ENCODE measurements at regions of chr3 and their contacts with region 1.

Region 1: DNA sequence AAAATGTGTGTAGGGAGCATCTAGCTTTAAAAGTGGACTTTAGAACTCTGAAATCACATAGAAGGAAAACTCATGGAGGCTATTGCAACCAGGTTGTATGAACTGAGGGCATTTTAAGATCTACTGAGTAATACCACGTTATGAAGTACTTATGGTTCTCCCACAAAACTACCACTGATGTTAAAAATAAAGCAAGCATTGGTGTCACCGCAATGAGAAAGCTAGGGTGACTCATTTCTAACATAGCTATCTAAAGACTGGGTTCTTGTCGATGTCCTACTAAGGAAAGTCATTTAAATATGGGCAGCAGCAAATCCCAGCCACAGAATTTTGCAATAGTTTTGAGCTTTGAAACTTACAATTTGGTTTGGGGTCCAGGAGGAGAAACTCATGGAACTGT is 584.8 kb downstream of the DIPK2A start:
- DNase-seq: no peak
- ATAC-seq: no peak
- H3K4me3 Mint-ChIP-seq: no peak overlapping the region
- H3K27ac Mint-ChIP-seq: no peak overlapping the region
- H3K4me1 Mint-ChIP-seq: no peaks in the 10 kb centered on the region
- H3K27me3 Mint-ChIP-seq: no peaks in the 10 kb centered on the region
- CTCF ChIP-seq: no peak

Region 2: GRCh38 chr3:144968750-144969350 is 412.5 kb after region 1 on chr3:
- CTCF ChIA-PET with region 1: no interaction called
- POLR2A ChIA-PET with region 1: interaction called, 13 read pairs
- intact Hi-C with region 1: no loop called
- DNase-seq: no peak
- ATAC-seq: no peak
- H3K4me3 Mint-ChIP-seq: no peak overlapping the region
- H3K27ac Mint-ChIP-seq: no peak overlapping the region
- H3K4me1 Mint-ChIP-seq: no peaks in the 10 kb centered on the region
- H3K27me3 Mint-ChIP-seq: no peaks in the 10 kb centered on the region
- CTCF ChIP-seq: no peak

Measured in activated B cell treated with CpG ODN at 0.5 μM for 24 hours (primary cell).